ENCODE measurements at regions of chr22 and their contacts with region 1.

Region 1: DNA sequence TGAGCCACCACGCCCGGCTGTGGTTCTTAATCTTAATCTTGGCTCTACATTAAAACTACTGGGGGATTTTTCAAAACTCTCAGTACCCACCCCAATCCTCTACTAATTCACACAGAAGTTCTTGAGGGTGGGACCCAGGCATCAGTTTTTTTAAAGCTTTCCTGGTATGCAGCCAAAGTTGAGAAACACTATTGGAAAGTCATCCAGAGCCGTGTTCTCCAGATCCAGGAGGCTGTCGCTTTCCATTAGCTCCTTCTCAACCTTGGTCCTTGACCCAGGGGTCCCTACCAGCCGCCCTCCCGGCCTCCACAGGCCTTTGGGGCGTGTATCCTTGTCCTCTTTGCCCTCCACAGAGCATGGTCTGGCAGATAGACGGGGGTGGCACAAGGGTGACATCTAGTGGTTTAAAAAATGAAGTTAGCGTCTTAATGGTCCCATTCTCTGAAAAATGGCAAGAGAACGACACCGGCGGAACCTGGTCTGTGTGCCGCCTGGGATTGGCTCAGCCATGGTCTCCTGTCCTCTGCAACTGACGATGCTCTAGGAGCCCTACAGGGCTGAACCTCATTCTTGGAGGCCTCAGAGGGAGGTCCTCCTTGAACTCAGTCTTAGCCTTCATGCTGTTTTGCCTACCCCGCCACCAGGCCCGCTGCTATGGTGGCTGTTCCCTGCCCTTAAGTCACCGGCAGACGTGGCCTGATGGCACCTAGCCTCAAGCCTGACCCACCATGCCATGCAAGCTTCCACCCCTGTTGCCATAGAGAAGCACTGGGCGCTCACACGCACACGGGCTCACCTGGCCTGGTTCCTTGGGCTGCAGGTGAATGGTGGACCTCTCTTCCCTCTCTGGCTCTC is 152.0 kb upstream of the SYN3 start:
- DNase-seq: peak in 3 of 6 donors; percentile 4 to 38 (median 22)
- ATAC-seq: peak in 3 of 4 donors; percentile 67 to 76 (median 76)
- H3K4me3 ChIP-seq: no peak overlapping the region
- H3K27ac ChIP-seq: no peak overlapping the region
- H3K4me1 ChIP-seq: no peaks in the 10 kb centered on the region
- H3K27me3 ChIP-seq: no peaks in the 10 kb centered on the region
- CTCF ChIP-seq: peak; percentile 14 to 58 (median 42)

Region 2: DNA sequence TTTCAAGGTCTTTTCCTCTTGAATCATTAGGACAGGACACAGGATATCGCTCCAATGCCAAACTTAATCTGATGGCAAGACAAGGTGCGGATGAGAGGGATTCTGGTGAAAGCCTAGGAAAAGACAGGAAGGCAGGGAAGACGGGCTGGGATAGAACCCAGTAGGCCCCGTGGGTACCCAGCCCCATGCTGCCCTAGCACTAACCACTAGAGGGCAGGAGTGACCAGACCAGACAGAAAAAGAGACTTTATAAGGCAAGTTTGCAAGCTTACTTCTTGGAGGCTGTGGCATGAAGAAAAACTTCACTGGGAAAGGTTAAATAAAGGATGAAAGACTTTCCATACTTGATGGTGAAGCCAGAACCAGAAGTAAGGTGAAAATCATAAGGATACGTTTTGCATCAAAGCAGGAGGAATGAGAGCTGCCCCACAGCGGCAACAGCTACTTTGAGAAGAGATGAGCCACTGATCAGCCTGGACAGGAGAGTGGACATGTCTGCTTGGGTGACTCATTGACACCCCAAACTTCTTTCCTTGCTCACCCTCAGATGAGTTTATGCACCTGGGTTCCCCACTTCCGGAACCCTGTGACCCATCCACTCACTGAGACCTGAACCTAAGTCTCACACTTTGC is 191.8 kb before region 1 on chr22:
- intact Hi-C with region 1: loop called in 2 of 3 experiments (anchors 10 kb)
- DNase-seq: peak in 5 of 6 donors; percentile 19 to 79 (median 53)
- ATAC-seq: peak; percentile 53 to 89 (median 80)
- H3K4me3 ChIP-seq: no peak overlapping the region
- H3K27ac ChIP-seq: no peak overlapping the region
- H3K4me1 ChIP-seq: no peaks in the 10 kb centered on the region
- H3K27me3 ChIP-seq: no peaks in the 10 kb centered on the region
- CTCF ChIP-seq: peak; percentile 70 to 86 (median 82)

Region 3: DNA sequence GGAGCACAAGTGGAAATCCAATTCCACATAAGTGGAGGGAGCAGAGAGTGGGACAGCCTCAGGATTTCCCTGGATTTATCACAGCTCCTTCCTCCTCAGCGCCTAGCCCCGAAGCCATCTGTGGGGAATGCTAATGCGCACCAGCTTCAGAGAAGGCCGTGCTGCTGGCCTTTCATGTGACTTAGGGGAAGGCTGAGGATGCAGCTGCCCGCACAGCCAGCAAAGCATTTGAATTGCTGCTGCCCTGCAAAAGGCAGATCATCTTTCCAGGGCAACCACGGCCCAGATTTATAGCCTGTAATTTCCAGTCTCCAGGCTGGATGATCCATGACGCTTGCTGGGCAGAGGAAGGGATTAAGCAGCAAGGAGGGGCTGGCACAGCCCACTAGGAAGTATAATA is 181.9 kb before region 1 on chr22:
- intact Hi-C with region 1: loop called in 1 of 3 experiments (anchors 10 kb)
- DNase-seq: no peak
- ATAC-seq: no peak
- H3K4me3 ChIP-seq: no peak overlapping the region
- H3K27ac ChIP-seq: no peak overlapping the region
- H3K4me1 ChIP-seq: no peaks in the 10 kb centered on the region
- H3K27me3 ChIP-seq: no peaks in the 10 kb centered on the region
- CTCF ChIP-seq: no peak